ENCODE measurements at regions of chr10 and their contacts with region 1.

Region 1: GRCh38 chr10:99732033-99732912 is at the starts of genes COX15 and CUTC:
- DNase-seq: peak; percentile 97
- H3K4me3 Mint-ChIP-seq: peak within 1 kb of the TSS; percentile 100
- H3K27ac Mint-ChIP-seq: peak within 1 kb of the TSS; percentile 100
- H3K4me1 Mint-ChIP-seq: peaks cover 29% of the 10 kb centered on the region
- H3K27me3 Mint-ChIP-seq: no peaks in the 10 kb centered on the region
- total RNA-seq, gene COX15: 31.3 to 31.5 TPM
- total RNA-seq, gene CUTC: 26.0 to 26.6 TPM

Region 2: GRCh38 chr10:98134431-98135221 is 1597.6 kb before region 1 on chr10 and contains the start of gene R3HCC1L:
- CTCF ChIA-PET with region 1: no interaction called
- POLR2A ChIA-PET with region 1: no interaction called
- intact Hi-C with region 1: loop called (anchors 10 kb)
- DNase-seq: peak; percentile 97
- H3K4me3 Mint-ChIP-seq: peak within 1 kb of the TSS; percentile 94
- H3K27ac Mint-ChIP-seq: peak within 1 kb of the TSS; percentile 85
- H3K4me1 Mint-ChIP-seq: peaks cover 43% of the 10 kb centered on the region
- H3K27me3 Mint-ChIP-seq: no peaks in the 10 kb centered on the region
- total RNA-seq, gene R3HCC1L: 13.2 to 13.3 TPM

Region 3: GRCh38 chr10:99659031-99659867 is 73.0 kb before region 1 on chr10 and contains the start of gene ENTPD7:
- CTCF ChIA-PET with region 1: interaction called, 3 read pairs
- POLR2A ChIA-PET with region 1: interaction called, 9 read pairs
- intact Hi-C with region 1: loop called (anchors 1 kb)
- DNase-seq: peak; percentile 96
- H3K4me3 Mint-ChIP-seq: peak within 1 kb of the TSS; percentile 83
- H3K27ac Mint-ChIP-seq: peak within 1 kb of the TSS; percentile 84
- H3K4me1 Mint-ChIP-seq: peaks cover 18% of the 10 kb centered on the region
- H3K27me3 Mint-ChIP-seq: peaks cover 18% of the 10 kb centered on the region
- total RNA-seq, gene ENTPD7: 3.0 to 3.3 TPM

Region 4: DNA sequence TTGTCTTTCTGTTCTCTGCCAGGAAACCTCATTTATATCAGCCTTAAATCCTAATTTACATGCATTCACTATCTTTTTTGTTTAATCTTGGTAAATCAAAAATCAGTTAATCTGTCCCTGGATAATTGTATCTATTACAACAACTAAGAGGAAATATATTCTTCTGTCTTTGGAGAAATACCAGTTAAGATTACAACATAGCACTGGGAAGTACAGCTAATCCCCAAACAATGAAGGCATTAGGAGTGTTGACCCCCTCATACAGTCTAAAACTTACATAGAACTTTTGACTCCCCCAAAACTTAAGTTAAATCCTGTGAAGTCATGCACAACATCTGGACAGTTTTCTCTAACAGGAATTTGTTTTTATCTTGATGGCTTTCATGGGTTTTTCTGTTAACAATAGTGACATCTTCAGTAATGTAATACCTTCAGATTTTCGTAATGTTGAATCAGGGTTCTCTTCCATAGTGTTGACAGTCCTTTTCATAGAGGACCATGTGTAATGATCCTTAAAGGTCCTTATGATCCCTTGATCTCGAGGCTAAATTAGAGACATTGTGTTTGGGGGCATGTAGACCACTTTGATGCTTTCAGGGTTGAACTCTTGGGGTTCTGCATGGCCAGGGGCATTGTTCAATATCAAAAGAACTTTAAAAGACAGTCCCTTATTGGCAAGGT is 26.1 kb after region 1 on chr10:
- CTCF ChIA-PET with region 1: no interaction called
- POLR2A ChIA-PET with region 1: no interaction called
- intact Hi-C with region 1: no loop called
- DNase-seq: no peak
- H3K4me3 Mint-ChIP-seq: no peak overlapping the region
- H3K27ac Mint-ChIP-seq: no peak overlapping the region
- H3K4me1 Mint-ChIP-seq: no peaks in the 10 kb centered on the region
- H3K27me3 Mint-ChIP-seq: no peaks in the 10 kb centered on the region

Region 5: DNA sequence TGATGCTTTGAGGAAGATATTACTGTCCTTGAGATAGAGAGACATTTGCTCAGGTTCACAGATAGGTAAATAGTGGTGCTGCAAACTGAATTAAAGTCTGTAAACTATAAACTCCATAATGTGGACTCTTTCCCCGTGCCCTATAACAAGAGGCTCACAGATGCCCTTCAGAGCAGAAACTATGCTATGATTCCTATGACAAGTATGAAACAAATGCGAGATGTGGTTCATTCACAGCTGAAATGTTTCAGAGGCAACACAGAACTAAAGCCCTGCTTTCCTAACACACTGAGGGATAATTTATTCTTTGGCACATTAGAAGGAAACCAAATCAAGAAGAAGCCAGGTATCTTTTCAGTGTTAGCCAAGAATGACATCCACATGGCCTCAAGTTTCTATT is 483.7 kb after region 1 on chr10:
- CTCF ChIA-PET with region 1: no interaction called
- POLR2A ChIA-PET with region 1: no interaction called
- intact Hi-C with region 1: no loop called
- DNase-seq: no peak
- H3K4me3 Mint-ChIP-seq: no peak overlapping the region
- H3K27ac Mint-ChIP-seq: no peak overlapping the region
- H3K4me1 Mint-ChIP-seq: no peaks in the 10 kb centered on the region
- H3K27me3 Mint-ChIP-seq: no peaks in the 10 kb centered on the region